ENCODE measurements at regions of chr10 and their contacts with region 1.

Region 1: DNA sequence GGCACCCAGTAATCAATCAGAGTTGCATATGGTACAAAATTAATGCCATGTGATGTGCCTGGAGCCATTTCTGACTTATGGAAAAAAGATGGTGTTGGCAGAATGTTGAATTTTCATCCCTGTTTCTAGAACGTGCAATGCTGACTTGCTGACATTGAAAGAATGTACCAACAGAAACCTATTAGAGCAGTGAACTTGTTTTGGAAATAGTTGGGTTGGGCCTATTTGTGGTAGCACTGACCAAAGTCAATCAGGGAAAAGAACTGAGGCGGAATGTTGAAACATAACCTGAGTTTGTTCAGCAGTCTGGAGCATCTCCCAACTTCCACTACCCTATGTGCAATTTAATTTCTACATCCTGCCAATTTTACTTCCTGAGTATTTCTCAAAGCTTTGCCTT is 11.7 kb upstream of the KIAA1217 start:
- DNase-seq: no peak
- ATAC-seq: no peak
- H3K4me3 Mint-ChIP-seq: no peak overlapping the region
- H3K27ac Mint-ChIP-seq: no peak overlapping the region
- H3K4me1 Mint-ChIP-seq: peaks cover 11% of the 10 kb centered on the region
- H3K27me3 Mint-ChIP-seq: no peaks in the 10 kb centered on the region
- CTCF ChIP-seq: no peak

Region 2: GRCh38 chr10:23994479-23995046 is 202.7 kb before region 1 on chr10:
- CTCF ChIA-PET with region 1: interaction called, 25 read pairs
- POLR2A ChIA-PET with region 1: no interaction called
- DNase-seq: peak; percentile 74
- ATAC-seq: peak; percentile 76
- H3K4me3 Mint-ChIP-seq: no peak overlapping the region
- H3K27ac Mint-ChIP-seq: no peak overlapping the region
- H3K4me1 Mint-ChIP-seq: no peaks in the 10 kb centered on the region; the same call in 1 of the 2 replicates
- H3K27me3 Mint-ChIP-seq: no peaks in the 10 kb centered on the region
- CTCF ChIP-seq: peak; percentile 76

Region 3: DNA sequence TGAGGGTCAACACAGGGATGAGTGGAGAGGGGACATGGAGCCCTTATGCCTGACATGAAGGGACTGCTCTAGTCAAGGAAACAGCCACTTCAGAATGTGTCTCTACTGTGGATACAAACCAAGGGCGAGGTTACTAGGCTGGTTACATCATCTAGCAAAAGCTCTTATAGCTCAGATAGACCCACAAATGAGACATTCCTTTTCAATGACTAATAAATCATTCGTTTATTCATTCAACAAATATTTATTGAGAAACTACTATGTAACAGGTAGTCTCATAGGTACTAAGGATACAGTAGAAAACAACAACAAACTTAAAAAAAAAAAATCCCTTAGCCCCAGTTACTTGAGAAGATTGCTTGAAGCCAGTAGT is 231.1 kb after region 1 on chr10:
- CTCF ChIA-PET with region 1: no interaction called
- POLR2A ChIA-PET with region 1: no interaction called
- DNase-seq: no peak
- ATAC-seq: no peak
- H3K4me3 Mint-ChIP-seq: no peak overlapping the region
- H3K27ac Mint-ChIP-seq: no peak overlapping the region
- H3K4me1 Mint-ChIP-seq: peaks cover 14% of the 10 kb centered on the region
- H3K27me3 Mint-ChIP-seq: no peaks in the 10 kb centered on the region
- CTCF ChIP-seq: no peak